IMR-90 (cell line): ENCODE measurements at regions of chr5 and their contacts with region 1.

Region 1: DNA sequence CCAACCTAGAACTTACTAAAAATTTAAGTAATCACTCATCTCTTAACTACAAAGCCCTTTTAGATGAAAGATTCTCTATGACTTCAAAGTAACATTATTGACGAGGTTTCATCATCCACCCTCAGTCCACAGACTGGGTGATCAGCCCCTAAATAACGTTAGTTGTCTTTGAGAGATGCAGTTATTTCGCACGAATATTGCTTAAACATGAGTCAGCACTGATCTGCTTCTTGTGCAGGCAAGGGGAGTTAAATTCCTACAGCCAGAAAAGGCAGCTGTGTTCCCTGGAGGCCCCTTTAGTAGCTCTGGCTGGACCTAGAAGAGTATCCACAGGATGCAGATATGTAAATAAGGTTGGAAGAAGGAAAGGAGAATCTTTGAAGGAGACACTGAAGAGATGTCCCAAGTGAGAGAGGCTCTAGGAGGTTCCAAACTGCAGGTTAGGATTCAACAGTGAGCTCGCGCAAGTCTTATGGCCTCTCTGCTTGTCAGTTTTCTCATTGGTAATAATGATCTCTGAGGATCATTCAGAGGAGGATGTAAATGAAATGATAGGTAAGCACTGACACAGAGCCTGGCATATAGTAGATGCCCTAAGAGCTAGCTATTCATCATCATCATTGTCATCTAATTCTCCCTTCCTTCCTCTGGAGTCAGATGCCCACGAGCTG is 122.2 kb upstream of the MAN2A1 start:
- DNase-seq: peak; percentile 28
- ATAC-seq: peak; percentile 81
- H3K4me3 ChIP-seq: no peak overlapping the region
- H3K27ac ChIP-seq: no peak overlapping the region
- H3K4me1 ChIP-seq: no peaks in the 10 kb centered on the region
- H3K27me3 ChIP-seq: no peaks in the 10 kb centered on the region
- CTCF ChIP-seq: no peak
- POLR2A ChIP-seq: no peak
- RAD21 ChIP-seq: no peak

Region 2: DNA sequence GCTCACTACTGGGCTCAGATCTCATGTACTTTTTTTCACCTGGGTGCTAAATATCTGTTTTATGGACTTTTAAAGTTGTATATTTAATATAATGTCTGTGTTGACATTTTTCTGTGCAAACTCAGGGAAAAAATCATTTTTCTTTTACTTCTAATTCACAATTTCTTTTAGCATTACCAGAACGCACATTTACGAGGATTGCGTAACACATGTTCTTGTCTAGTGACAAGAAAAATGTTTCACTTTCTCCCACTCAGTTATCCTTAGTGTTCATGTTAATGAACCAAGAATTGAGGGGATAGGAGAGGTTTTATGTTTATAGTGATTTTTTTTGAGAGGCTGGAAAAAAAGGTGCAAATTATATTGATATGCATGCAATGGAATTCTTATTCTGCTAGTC is 71.4 kb before region 1 on chr5:
- CTCF ChIA-PET with region 1: no interaction called
- POLR2A ChIA-PET with region 1: no interaction called
- dilution Hi-C with region 1: no loop called
- in situ Hi-C with region 1: no loop called
- intact Hi-C with region 1: no loop called
- DNase-seq: no peak
- ATAC-seq: no peak
- H3K4me3 ChIP-seq: no peak overlapping the region
- H3K27ac ChIP-seq: no peak overlapping the region
- H3K4me1 ChIP-seq: no peaks in the 10 kb centered on the region
- H3K27me3 ChIP-seq: peaks cover 2% of the 10 kb centered on the region; the same call in 1 of the 2 replicates
- CTCF ChIP-seq: no peak
- POLR2A ChIP-seq: no peak
- RAD21 ChIP-seq: no peak

Region 3: DNA sequence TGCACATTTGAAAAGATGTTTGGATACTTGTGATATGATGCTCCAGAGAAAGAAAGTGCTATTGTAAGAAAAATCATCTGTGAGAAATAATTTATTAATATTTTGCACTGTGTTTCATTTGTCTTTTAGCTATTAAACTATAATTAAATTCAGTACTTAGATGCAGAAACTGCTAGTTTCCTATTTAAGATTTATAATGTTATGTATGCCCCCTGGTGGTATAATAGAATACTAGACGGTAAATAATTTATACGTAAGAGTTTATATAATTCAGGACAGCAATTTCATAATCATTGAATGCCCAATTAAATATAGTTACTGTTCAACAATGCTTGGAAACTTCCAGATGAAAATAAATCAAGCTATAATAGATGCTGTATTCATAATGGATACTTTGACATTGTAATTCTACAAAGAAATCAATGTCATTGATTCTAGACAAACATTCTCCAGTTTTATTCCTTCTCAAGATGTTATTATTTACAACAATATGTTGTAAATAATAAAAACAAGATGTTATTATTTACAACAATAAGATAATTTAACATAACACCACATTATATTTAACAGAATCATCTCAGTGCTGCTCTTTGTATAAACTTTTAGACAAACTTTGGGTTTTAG is 1058.0 kb after region 1 on chr5:
- CTCF ChIA-PET with region 1: no interaction called
- POLR2A ChIA-PET with region 1: no interaction called
- dilution Hi-C with region 1: no loop called
- in situ Hi-C with region 1: no loop called
- intact Hi-C with region 1: loop called (anchors 10 kb)
- DNase-seq: peak; percentile 52
- ATAC-seq: peak; percentile 58; the same call in 1 of the 2 replicates
- H3K4me3 ChIP-seq: no peak overlapping the region
- H3K27ac ChIP-seq: no peak overlapping the region
- H3K4me1 ChIP-seq: no peaks in the 10 kb centered on the region; the same call in 1 of the 2 replicates
- H3K27me3 ChIP-seq: no peaks in the 10 kb centered on the region
- CTCF ChIP-seq: peak; percentile 57
- POLR2A ChIP-seq: no peak
- RAD21 ChIP-seq: peak; percentile 34